ENCODE measurements at regions of chr15 and their contacts with region 1.

Region 1: DNA sequence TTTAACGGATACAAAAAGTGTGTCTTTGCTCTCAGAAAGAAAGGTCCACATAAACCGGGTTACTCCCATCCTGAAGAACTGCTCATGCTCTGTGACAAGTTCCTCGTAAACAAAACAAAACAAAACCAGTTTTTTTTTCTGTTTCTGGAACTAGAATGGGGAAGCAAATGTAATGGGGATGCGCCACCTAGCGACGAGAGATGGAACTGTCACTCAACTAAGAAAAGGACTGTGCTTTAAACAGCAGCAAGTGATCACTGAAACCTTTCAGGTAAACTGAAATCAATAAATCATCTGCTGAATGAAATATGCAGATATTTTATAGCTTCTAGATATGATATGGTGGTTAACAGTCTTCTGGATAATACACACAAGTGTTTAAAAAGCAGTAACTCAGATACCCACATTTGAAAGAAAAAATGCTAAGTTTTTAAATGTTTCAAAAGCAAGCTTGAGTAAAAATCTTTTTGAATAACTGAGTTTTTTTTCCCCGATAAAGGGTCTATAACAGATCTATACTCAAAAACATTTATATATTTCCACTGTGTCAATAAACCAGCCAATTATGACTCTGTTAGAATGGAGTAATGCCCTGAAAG is 10.9 kb downstream of the TM2D3 start:
- DNase-seq: peak; percentile 91

Region 2: DNA sequence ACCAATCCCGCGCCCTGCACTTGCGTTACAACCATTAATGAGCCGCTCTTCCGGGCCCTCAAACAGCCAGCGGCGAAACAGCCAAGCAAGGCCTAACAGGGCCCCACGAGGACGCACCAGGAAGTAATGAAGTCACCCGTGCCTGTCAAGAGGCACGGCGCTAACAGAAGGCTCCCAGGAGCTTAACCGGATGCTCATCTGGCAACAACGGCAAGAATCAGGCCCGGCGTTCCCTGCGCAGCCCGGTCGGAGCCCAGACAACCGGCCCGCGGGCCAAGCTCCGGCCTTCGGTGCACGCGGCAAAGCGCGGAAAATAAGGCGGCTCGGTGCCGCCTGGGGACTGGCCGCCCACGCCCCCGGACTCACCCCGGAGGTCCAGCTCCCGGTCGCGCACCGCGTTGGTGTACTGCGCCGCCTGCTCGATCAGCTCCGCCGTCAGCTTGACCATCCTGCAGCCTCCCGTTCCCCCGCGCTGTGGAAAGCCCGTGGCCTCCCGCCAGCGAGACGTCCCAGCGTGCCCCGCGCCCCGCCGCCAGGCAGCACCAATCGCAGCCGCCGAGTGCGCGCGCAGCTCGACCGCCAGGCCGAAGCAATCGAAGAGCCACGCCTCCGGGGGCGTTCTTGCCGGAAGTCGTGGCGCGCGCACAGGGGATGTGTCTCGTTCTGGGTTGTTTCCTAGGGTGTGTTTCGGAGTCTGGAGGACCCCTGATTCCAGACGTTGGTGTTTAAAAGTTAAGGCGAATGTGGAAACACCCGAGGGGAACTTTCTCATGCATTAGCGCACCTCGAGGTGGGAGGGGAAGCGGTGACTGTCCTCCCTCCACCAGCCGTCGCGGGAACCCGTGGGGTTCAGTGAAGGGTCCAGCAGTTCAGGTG is 346.3 kb before region 1 on chr15 and contains the start of gene SNRPA1:
- intact Hi-C with region 1: loop called (anchors 5 kb)
- DNase-seq: peak; percentile 100
- total RNA-seq, gene SNRPA1: 33.6 to 38.2 TPM

Region 3: GRCh38 chr15:101501703-101502373 is 139.4 kb before region 1 on chr15:
- intact Hi-C with region 1: loop called in 1 of 2 experiments (anchors 10 kb)
- DNase-seq: peak; percentile 79

Region 4: GRCh38 chr15:101530224-101530954 is 110.9 kb before region 1 on chr15:
- intact Hi-C with region 1: loop called in 1 of 2 experiments (anchors 10 kb)
- DNase-seq: no peak

Region 5: GRCh38 chr15:101710806-101711205 is 69.5 kb after region 1 on chr15:
- intact Hi-C with region 1: no loop called
- DNase-seq: no peak

Region 6: DNA sequence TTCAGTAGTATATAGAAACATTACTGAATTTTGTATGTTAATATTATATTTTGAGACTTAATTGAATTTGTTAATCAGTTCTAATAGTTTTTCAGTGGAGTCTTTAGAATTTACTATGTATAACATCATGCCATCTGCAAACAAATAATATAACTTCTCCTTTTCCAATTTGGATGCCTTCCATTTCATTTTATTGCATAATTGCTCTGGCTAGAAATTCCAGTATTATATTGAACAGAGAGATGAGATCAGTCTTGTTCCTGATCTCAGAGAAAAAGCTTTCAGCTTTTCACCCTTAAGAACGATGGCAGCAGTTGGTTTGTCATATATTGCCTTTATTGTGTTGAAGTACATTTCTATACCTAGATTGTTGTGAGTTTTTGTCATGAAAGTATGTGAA is 211.1 kb after region 1 on chr15:
- intact Hi-C with region 1: no loop called
- DNase-seq: no peak